PC-3 (cell line): ENCODE measurements at regions of chr7 and their contacts with region 1.

Region 1: GRCh38 chr7:106112117-106112971 is at the start of gene SYPL1:
- DNase-seq: peak; percentile 94
- ATAC-seq: peak; percentile 82
- H3K4me3 ChIP-seq: peak within 1 kb of the TSS; percentile 90
- H3K27ac ChIP-seq: peak within 1 kb of the TSS; percentile 71
- H3K4me1 ChIP-seq: peaks cover 30% of the 10 kb centered on the region
- H3K27me3 ChIP-seq: no peaks in the 10 kb centered on the region
- CTCF ChIP-seq: 0 out of 2 replicates have a peak, but pooled peaks have one; percentile 20
- total RNA-seq, gene SYPL1: 45.9 and 57.9 TPM in 2 replicates

Region 2: DNA sequence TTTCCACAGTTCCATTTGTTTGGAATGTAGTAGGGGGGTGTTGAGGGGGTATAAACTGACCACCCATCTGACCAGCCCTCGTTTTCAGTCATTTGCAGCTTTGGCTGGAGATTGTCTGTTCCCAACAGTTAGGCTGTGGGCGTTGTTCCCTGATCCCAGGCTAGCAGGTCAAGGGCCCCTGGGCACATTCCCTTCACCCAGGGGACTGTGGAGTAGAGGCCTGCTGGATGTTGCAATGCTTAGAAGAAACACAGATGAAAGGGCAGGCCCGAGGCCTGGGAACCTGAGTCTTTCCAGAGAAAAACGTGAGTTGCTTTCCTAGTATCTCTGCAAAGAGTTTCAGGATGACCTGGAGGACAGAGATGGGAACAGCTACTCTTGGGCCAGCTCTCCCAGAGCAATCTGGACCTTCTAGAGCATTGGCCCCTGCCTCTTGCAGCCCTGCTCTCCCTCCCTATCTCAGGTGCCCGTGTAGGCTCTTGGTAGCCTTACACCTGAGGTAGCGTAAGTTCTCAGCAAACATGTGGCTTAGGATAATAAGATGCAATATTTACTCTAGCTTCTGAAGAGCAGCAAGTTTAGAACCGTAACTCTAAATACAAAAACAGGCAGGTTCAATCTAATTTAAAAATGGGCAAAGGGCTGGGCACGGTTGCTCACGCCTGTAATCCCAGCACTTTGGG is 431.7 kb before region 1 on chr7:
- CTCF ChIA-PET with region 1: no interaction called
- POLR2A ChIA-PET with region 1: interaction called, 29 read pairs
- intact Hi-C with region 1: no loop called
- DNase-seq: no peak
- ATAC-seq: no peak
- H3K4me3 ChIP-seq: no peak overlapping the region
- H3K27ac ChIP-seq: no peak overlapping the region
- H3K4me1 ChIP-seq: peaks cover 19% of the 10 kb centered on the region
- H3K27me3 ChIP-seq: no peaks in the 10 kb centered on the region
- CTCF ChIP-seq: no peak

Region 3: GRCh38 chr7:106064771-106065585 is 47.4 kb before region 1 on chr7:
- CTCF ChIA-PET with region 1: interaction called, 8 read pairs
- POLR2A ChIA-PET with region 1: interaction called, 25 read pairs
- intact Hi-C with region 1: loop called (anchors 2 kb)
- DNase-seq: peak; percentile 99
- ATAC-seq: peak; percentile 86
- H3K4me3 ChIP-seq: peak overlapping the region; percentile 71
- H3K27ac ChIP-seq: peak overlapping the region; percentile 94
- H3K4me1 ChIP-seq: peaks cover 63% of the 10 kb centered on the region
- H3K27me3 ChIP-seq: no peaks in the 10 kb centered on the region
- CTCF ChIP-seq: no peak

Region 4: GRCh38 chr7:106139265-106140251 is 27.2 kb after region 1 on chr7:
- CTCF ChIA-PET with region 1: no interaction called
- POLR2A ChIA-PET with region 1: no interaction called
- intact Hi-C with region 1: no loop called
- DNase-seq: no peak
- ATAC-seq: no peak
- H3K4me3 ChIP-seq: no peak overlapping the region
- H3K27ac ChIP-seq: no peak overlapping the region
- H3K4me1 ChIP-seq: no peaks in the 10 kb centered on the region
- H3K27me3 ChIP-seq: no peaks in the 10 kb centered on the region
- CTCF ChIP-seq: no peak

Region 5: GRCh38 chr7:106153891-106154449 is 41.6 kb after region 1 on chr7:
- CTCF ChIA-PET with region 1: interaction called, 6 read pairs
- POLR2A ChIA-PET with region 1: no interaction called
- intact Hi-C with region 1: loop called (anchors 5 kb)
- DNase-seq: peak; percentile 93
- ATAC-seq: peak; percentile 99
- H3K4me3 ChIP-seq: peak overlapping the region; percentile 39; the same call in 1 of the 2 replicates
- H3K27ac ChIP-seq: no peak overlapping the region
- H3K4me1 ChIP-seq: peaks cover 8% of the 10 kb centered on the region
- H3K27me3 ChIP-seq: no peaks in the 10 kb centered on the region
- CTCF ChIP-seq: peak; percentile 99

Region 6: DNA sequence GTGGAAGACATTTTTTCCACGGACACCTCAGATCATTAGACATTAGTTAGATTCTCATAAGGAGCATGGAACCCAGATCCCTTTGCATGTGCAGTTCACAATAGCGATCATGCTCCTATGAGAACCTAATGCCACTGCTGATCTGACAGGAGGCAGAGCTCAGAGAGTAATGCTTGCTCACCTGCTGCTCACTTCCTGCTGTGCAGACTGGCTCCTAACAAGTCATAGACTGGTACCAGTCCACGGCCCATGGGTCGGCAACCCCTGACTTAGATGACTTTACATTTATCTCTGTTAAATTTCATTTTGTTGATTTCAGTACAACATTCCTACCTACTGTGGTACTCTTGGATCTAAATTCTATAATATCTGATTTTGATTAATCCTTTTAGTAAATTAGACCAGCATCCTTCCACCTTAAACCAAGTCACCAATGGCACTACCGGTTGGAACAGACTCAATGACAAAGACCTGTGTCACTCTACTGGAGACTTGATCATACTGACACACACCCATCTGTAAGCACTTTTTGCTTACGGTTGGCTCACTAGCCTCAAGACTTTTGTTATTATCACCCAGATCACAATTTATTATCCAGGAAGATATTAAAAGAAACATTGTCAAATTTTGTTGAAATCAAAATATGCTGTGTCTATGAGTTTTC is 556.6 kb after region 1 on chr7:
- CTCF ChIA-PET with region 1: no interaction called
- POLR2A ChIA-PET with region 1: interaction called, 12 read pairs
- intact Hi-C with region 1: no loop called
- DNase-seq: peak; percentile 64
- ATAC-seq: peak; percentile 94
- H3K4me3 ChIP-seq: no peak overlapping the region
- H3K27ac ChIP-seq: peak overlapping the region; percentile 40
- H3K4me1 ChIP-seq: peaks cover 18% of the 10 kb centered on the region
- H3K27me3 ChIP-seq: no peaks in the 10 kb centered on the region
- CTCF ChIP-seq: no peak